Activated CD4-positive, alpha-beta T cell treated with anti-CD3 and anti-CD28 coated beads for 36 hours (primary cell): ENCODE measurements at regions of chr1 and their contacts with region 1.

Region 1: GRCh38 chr1:24150234-24151174 is 7.6 kb upstream of the IL22RA1 start:
- DNase-seq: peak; percentile 94
- ATAC-seq: peak; percentile 92
- H3K4me3 Mint-ChIP-seq: peak overlapping the region; percentile 34
- H3K27ac Mint-ChIP-seq: no peak overlapping the region
- H3K4me1 Mint-ChIP-seq: peaks cover 19% of the 10 kb centered on the region
- H3K27me3 Mint-ChIP-seq: peaks cover 18% of the 10 kb centered on the region

Region 2: GRCh38 chr1:24070821-24071393 is 79.6 kb before region 1 on chr1:
- CTCF ChIA-PET with region 1: interaction called, 11 read pairs
- POLR2A ChIA-PET with region 1: no interaction called
- intact Hi-C with region 1: loop called (anchors 1 to 2 kb)
- DNase-seq: peak; percentile 87
- ATAC-seq: peak; percentile 97
- H3K4me3 Mint-ChIP-seq: no peak overlapping the region
- H3K27ac Mint-ChIP-seq: no peak overlapping the region
- H3K4me1 Mint-ChIP-seq: peaks cover 4% of the 10 kb centered on the region
- H3K27me3 Mint-ChIP-seq: peaks cover 6% of the 10 kb centered on the region

Region 3: DNA sequence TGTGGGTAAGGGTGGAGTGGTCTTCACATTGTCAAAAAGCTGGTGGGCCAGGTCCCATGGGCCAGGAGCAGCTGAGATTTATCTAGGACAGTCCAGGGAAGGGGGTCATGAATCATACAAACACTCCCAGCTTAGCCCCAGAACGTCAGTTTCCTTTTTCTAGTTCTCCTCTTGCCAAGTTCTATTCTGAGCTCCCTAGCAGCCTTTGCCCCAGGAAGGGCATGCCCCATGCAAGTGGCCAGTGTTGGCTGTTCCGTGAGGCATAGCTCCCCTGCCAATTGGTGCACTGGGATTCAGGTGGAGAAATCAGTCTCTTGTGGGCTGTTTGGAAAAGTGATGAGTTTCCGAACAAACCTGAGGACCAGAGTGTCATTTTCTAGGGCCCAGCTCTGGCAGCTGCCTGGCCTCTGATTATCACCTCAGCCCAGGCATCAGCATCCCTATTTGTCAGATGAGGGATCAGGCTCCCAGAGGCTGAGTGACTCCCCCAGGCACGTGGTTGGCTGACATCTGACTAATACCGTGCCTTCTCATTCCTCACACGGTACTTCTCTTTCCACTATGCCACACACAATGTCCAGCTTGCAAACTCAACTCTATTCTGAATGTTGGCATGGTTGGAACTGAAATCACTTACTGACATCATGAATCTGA is 24.4 kb before region 1 on chr1:
- CTCF ChIA-PET with region 1: interaction called, 13 read pairs
- POLR2A ChIA-PET with region 1: no interaction called
- intact Hi-C with region 1: no loop called
- DNase-seq: peak; percentile 29
- ATAC-seq: peak; percentile 69
- H3K4me3 Mint-ChIP-seq: no peak overlapping the region
- H3K27ac Mint-ChIP-seq: no peak overlapping the region
- H3K4me1 Mint-ChIP-seq: peaks cover 2% of the 10 kb centered on the region
- H3K27me3 Mint-ChIP-seq: peaks cover 2% of the 10 kb centered on the region

Region 4: DNA sequence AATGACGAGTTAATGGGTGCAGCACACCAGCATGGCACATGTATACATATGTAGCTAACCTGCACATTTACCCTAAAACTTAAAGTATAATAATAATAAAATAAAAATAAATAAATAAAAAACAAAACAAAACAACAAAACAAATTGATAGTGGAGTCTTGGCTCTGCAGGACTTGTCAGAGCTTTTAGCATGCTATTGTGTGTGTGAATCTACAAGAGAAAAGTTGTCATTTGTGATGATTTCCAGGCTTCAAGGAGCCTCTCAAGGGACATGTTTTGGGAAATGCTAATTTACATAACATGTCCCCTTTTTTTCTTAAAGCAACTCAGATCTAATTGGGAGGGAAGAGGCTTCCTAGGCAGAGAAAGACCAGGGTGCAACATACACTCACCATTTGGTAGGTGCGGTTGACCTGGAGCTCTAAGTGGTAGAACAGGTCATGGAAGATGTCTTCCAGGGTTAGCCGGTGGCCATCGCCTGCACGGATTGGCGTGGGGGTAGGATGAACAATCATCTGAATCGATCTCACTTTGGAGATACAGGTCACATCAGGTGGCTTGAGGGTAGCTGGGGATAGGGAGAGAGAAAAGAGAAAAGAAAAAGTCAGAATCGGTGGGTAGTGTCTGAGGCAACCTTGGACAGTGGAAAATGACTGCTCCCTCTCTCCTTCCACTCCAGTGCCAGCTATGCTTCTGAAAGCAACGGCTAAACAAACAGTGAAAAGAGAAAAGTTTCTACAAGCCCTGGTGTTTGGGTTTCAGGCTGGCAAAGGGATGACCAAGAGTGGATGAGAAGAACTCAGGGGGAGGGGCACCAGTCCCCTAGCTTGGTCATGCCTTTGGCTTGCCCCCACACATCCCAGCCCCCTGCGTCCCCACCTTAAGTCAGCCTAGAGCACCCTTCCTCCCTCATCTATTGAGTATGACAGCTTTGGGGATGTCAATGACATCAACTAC is 16.4 kb before region 1 on chr1:
- CTCF ChIA-PET with region 1: interaction called, 13 read pairs
- POLR2A ChIA-PET with region 1: no interaction called
- intact Hi-C with region 1: no loop called
- DNase-seq: no peak
- ATAC-seq: no peak
- H3K4me3 Mint-ChIP-seq: no peak overlapping the region
- H3K27ac Mint-ChIP-seq: no peak overlapping the region
- H3K4me1 Mint-ChIP-seq: no peaks in the 10 kb centered on the region
- H3K27me3 Mint-ChIP-seq: peaks cover 1% of the 10 kb centered on the region

Region 5: GRCh38 chr1:24186993-24187805 is 36.7 kb after region 1 on chr1 and contains the start of gene IFNLR1:
- CTCF ChIA-PET with region 1: interaction called, 17 read pairs
- POLR2A ChIA-PET with region 1: no interaction called
- intact Hi-C with region 1: loop called (anchors 1 to 2 kb)
- DNase-seq: peak; percentile 93
- ATAC-seq: peak; percentile 88
- H3K4me3 Mint-ChIP-seq: peak within 1 kb of the TSS; percentile 73
- H3K27ac Mint-ChIP-seq: peak within 1 kb of the TSS; percentile 71
- H3K4me1 Mint-ChIP-seq: peaks cover 47% of the 10 kb centered on the region
- H3K27me3 Mint-ChIP-seq: no peaks in the 10 kb centered on the region
- total RNA-seq, gene IFNLR1: 6.6 to 7.4 TPM